Activated B cell treated with CpG ODN at 0.5 μM for 24 hours (primary cell): ENCODE measurements at regions of chr12 and their contacts with region 1.

Region 1: DNA sequence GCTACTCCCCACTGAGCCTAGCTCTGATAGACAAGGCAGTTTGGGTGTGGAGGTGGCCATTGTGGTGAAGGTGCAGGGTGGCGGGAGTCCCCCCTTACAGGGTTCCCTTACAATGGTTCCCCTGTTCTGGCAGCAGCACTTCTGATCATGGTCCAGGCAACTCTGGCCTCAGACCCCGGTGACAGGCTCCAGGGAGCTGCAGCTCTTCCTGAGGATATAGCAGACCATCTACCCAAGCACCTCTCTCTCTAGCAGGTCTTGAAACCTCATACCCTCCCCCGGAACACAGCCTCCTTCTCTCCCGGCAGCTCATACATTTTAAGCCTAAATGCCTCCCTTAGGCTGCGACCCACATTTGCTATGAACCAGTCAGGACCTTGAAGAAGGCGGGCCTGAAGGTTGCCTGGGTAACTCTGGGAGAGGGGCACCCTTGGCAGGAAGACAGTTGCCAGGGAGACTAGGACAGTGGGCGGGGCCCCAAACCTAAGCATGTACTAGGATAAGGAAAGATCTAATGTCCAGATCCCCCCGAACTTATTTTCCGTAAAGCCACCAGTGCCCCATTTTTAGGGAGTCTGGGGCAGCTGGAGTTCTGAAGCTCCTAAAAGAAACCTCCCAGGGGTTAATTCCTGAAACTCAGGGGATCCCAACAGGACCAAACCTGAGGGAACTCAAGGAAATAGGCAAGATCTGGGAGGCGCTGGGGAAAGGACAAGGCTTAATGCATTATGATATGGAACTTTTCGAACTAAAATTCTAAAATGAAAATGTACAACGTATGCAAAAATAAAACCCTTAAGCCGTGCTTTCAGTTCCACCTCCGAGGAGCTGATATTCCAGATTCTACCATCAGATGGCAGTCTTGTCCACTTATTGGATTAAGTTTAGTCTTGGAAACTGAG is 4.5 kb upstream of the GDF11 start:
- DNase-seq: peak; percentile 65
- ATAC-seq: peak; percentile 87
- H3K4me3 Mint-ChIP-seq: peak overlapping the region; percentile 92
- H3K27ac Mint-ChIP-seq: peak overlapping the region; percentile 91
- H3K4me1 Mint-ChIP-seq: peaks cover 27% of the 10 kb centered on the region
- H3K27me3 Mint-ChIP-seq: no peaks in the 10 kb centered on the region
- CTCF ChIP-seq: peak; percentile 73

Region 2: GRCh38 chr12:55188974-55189556 is 549.3 kb before region 1 on chr12:
- CTCF ChIA-PET with region 1: interaction called, 4 read pairs
- POLR2A ChIA-PET with region 1: no interaction called
- intact Hi-C with region 1: loop called (anchors 1 kb)
- DNase-seq: no peak
- ATAC-seq: peak; percentile 81
- H3K4me3 Mint-ChIP-seq: no peak overlapping the region
- H3K27ac Mint-ChIP-seq: no peak overlapping the region
- H3K4me1 Mint-ChIP-seq: no peaks in the 10 kb centered on the region
- H3K27me3 Mint-ChIP-seq: peaks cover 6% of the 10 kb centered on the region
- CTCF ChIP-seq: peak; percentile 87

Region 3: GRCh38 chr12:55659486-55660385 is 78.6 kb before region 1 on chr12:
- CTCF ChIA-PET with region 1: interaction called, 16 read pairs
- POLR2A ChIA-PET with region 1: no interaction called
- intact Hi-C with region 1: loop called (anchors 1 kb)
- DNase-seq: no peak
- ATAC-seq: peak; percentile 60
- H3K4me3 Mint-ChIP-seq: no peak overlapping the region
- H3K27ac Mint-ChIP-seq: no peak overlapping the region
- H3K4me1 Mint-ChIP-seq: peaks cover 3% of the 10 kb centered on the region
- H3K27me3 Mint-ChIP-seq: no peaks in the 10 kb centered on the region
- CTCF ChIP-seq: no peak

Region 4: GRCh38 chr12:55817346-55818139 is 79.2 kb after region 1 on chr12 and contains the starts of genes ORMDL2 and SARNP:
- CTCF ChIA-PET with region 1: interaction called, 15 read pairs
- POLR2A ChIA-PET with region 1: interaction called, 13 read pairs
- intact Hi-C with region 1: loop called (anchors 2 kb)
- DNase-seq: peak; percentile 80
- ATAC-seq: peak; percentile 94
- H3K4me3 Mint-ChIP-seq: no peak within 1 kb of the TSS
- H3K27ac Mint-ChIP-seq: no peak within 1 kb of the TSS
- H3K4me1 Mint-ChIP-seq: peaks cover 21% of the 10 kb centered on the region
- H3K27me3 Mint-ChIP-seq: no peaks in the 10 kb centered on the region
- CTCF ChIP-seq: no peak
- total RNA-seq, gene ORMDL2: 68.0 and 70.9 TPM in 2 replicates
- total RNA-seq, gene SARNP: 53.6 and 58.7 TPM in 2 replicates

Region 5: GRCh38 chr12:55940065-55940732 is 201.8 kb after region 1 on chr12:
- CTCF ChIA-PET with region 1: interaction called, 58 read pairs
- POLR2A ChIA-PET with region 1: interaction called, 6 read pairs
- intact Hi-C with region 1: loop called (anchors 1 kb)
- DNase-seq: peak; percentile 63
- ATAC-seq: peak; percentile 99
- H3K4me3 Mint-ChIP-seq: no peak overlapping the region
- H3K27ac Mint-ChIP-seq: peak overlapping the region; percentile 47
- H3K4me1 Mint-ChIP-seq: peaks cover 12% of the 10 kb centered on the region
- H3K27me3 Mint-ChIP-seq: no peaks in the 10 kb centered on the region
- CTCF ChIP-seq: peak; percentile 63

Region 6: GRCh38 chr12:56041552-56042429 is 303.4 kb after region 1 on chr12 and contains the start of gene RPS26:
- CTCF ChIA-PET with region 1: interaction called, 5 read pairs
- POLR2A ChIA-PET with region 1: interaction called, 4 read pairs
- intact Hi-C with region 1: loop called (anchors 1 kb)
- DNase-seq: peak; percentile 77
- ATAC-seq: peak; percentile 93
- H3K4me3 Mint-ChIP-seq: peak within 1 kb of the TSS; percentile 99
- H3K27ac Mint-ChIP-seq: peak within 1 kb of the TSS; percentile 98
- H3K4me1 Mint-ChIP-seq: peaks cover 33% of the 10 kb centered on the region
- H3K27me3 Mint-ChIP-seq: no peaks in the 10 kb centered on the region
- CTCF ChIP-seq: no peak
- total RNA-seq, gene RPS26: 23.9 and 28.1 TPM in 2 replicates

Region 7: DNA sequence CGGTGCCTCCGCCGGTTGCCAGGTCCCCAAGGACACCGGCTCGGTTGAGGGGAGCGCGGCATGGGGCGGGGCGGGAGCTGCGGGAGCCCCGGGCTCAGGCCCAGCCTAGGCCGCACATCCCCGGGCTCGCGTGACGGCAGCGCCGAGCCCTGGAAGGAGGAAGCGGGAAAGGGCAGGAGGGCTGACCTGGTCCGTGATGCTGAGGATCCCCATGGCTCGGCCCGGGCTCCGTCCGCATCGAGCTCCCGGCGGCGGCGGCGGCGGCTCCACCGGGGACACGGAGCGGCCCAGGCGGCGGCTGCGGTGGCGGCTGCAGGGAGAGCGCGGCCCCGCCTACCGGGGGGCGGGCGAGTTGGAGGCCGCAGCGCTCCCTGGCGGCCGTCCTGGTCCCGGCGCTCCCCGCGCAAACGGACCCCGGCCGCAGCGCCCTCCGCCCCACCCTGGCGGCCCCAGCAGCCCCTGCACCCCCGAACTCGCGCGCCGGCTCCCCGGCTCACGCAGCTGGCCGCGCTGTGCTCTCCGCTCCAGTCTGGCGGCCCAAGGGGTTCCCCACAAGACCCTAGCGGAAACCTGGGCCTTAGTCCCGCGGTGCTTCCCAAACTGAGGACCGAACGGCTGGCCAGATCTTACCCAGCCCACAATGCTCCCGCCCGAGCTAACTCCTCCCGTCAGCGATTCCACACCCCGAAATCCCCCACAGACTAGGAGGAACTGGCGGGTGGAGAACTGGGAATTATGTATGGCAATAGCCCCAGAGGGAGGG is 519.9 kb after region 1 on chr12 and contains the start of gene ANKRD52:
- CTCF ChIA-PET with region 1: no interaction called
- POLR2A ChIA-PET with region 1: no interaction called
- intact Hi-C with region 1: loop called (anchors 1 kb)
- DNase-seq: peak; percentile 89
- ATAC-seq: peak; percentile 94
- H3K4me3 Mint-ChIP-seq: peak within 1 kb of the TSS; percentile 91
- H3K27ac Mint-ChIP-seq: peak within 1 kb of the TSS; percentile 77
- H3K4me1 Mint-ChIP-seq: peaks cover 21% of the 10 kb centered on the region
- H3K27me3 Mint-ChIP-seq: no peaks in the 10 kb centered on the region
- CTCF ChIP-seq: peak; percentile 28
- total RNA-seq, gene ANKRD52: 44.1 and 44.8 TPM in 2 replicates